Heart right ventricle (tissue), 16 donors: ENCODE measurements at regions of chr15 and their contacts with region 1.

Region 1: DNA sequence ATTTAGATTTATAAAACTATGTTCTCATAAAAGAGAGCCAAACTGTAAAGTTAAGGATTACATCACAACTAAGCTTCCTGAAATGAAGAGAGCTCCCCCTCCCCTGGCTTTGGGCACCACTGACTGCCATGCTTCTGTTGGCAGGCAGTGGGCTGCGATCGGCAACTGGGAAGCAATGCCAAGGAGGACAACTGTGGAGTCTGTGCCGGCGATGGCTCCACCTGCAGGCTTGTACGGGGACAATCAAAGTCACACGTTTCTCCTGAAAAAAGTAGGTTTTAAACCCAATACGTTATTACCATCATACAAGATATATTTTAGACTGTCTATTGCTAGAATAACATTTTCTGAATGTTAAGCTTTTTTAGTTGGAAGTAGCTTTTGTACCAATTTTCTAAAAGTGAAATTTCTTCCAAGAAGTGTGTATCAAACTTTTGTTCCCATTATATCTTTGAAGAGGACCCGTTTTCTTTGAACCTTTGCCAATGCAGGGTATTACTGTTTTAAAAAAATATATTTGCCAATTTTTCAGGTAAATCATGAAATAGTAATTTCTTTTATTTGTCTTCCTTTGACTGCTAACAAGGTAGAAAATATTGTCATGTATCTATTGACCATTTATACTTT is 184.1 kb downstream of the ADAMTSL3 start:
- DNase-seq: peak in 1 of 2 donors; percentile 48
- ATAC-seq: peak in 2 of 8 donors; percentile 47 to 56
- H3K4me3 ChIP-seq: no peak overlapping the region
- H3K27ac ChIP-seq: no peak overlapping the region
- H3K4me1 ChIP-seq: peaks cover 0 to 22% (median 8%) of the 10 kb centered on the region in 9 donors
- H3K27me3 ChIP-seq: no peaks in the 10 kb centered on the region
- CTCF ChIP-seq: peak in 8 of 9 donors; percentile 31 to 60 (median 50)

Region 2: GRCh38 chr15:83890587-83890986 is 52.5 kb after region 1 on chr15:
- intact Hi-C with region 1: loop called in 2 of 10 experiments (anchors 10 kb)
- DNase-seq: peak in 1 of 2 donors; percentile 14
- ATAC-seq: peak; percentile 53 to 93 (median 84)
- H3K4me3 ChIP-seq: peak overlapping the region in 1 of 10 donors; percentile 13
- H3K27ac ChIP-seq: peak overlapping the region in 6 of 10 donors; percentile 7 to 63 (median 34)
- H3K4me1 ChIP-seq: peaks cover 0 to 28% (median 14%) of the 10 kb centered on the region in 9 donors
- H3K27me3 ChIP-seq: no peaks in the 10 kb centered on the region
- CTCF ChIP-seq: no peak